ENCODE measurements at regions of chr17 and their contacts with region 1.

Region 1: GRCh38 chr17:42577532-42578281 is at the start of gene PSMC3IP:
- DNase-seq: peak in 1 of 2 donors; percentile 96
- H3K4me3 ChIP-seq: peak within 1 kb of the TSS; percentile 59 to 66
- H3K27ac ChIP-seq: peak within 1 kb of the TSS; percentile 75
- H3K4me1 ChIP-seq: peaks cover 21% of the 10 kb centered on the region
- H3K27me3 ChIP-seq: no peaks in the 10 kb centered on the region
- CTCF ChIP-seq: peak in 2 of 3 experiments; percentile 14 to 25
- POLR2A ChIP-seq: peak in 1 of 2 donors; percentile 56
- total RNA-seq, gene PSMC3IP: 0.98 TPM

Region 2: GRCh38 chr17:42677921-42678781 is 100.4 kb after region 1 on chr17:
- intact Hi-C with region 1: loop called (anchors 1 kb)
- DNase-seq: peak in 1 of 2 donors; percentile 95
- H3K4me3 ChIP-seq: peak overlapping the region; percentile 70 to 92
- H3K27ac ChIP-seq: peak overlapping the region; percentile 98
- H3K4me1 ChIP-seq: peaks cover 80% of the 10 kb centered on the region
- H3K27me3 ChIP-seq: no peaks in the 10 kb centered on the region
- CTCF ChIP-seq: no peak
- POLR2A ChIP-seq: peak in 1 of 2 donors; percentile 45

Region 3: DNA sequence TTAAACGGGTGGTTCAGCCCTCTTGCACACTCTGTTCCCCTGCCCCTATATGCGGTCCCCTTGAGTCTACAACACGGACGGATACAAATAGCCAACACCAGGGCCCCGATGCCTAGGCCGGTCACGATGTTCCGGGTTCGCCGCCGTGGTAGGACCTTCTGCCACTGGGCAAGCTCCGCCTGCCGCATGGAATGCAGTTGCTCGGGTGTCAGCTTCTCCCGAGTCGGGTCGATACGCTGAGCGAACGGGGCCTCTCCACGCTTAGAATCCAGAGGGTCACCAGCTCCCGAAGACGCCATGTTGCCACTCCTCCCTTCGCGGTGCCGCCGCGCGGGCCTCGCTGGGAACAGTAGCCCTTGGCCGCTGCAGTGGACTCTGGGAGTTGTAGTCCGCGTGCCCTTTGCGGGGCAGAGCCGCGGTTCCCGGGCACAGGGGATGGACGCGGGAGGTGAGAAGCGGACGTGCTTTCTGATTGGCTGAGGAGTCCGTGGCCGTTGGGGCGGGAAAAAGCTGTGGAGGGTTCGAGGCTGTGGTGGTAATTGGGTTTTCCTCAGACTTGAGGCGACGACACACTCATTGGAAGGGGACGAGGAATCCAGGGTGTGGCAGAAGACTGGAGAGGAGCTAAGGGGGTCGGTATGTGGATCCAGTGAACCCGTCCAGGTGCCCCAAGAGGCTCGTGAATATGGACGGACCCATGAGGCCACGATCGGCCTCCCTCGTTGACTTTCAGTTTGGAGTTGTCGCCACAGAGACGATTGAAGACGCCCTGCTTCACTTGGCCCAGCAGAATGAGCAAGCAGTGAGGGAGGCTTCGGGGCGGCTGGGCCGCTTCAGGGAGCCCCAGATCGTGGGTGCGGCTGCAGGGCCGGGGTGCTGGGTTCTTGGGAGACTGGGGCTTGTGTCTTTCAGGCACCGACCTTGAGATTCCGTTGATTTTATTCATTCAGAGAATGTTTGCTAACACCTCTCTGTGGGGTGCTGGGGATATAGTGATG is 221.0 kb after region 1 on chr17 and contains the starts of genes CNTD1 and COA3:
- intact Hi-C with region 1: no loop called
- DNase-seq: no peak
- H3K4me3 ChIP-seq: peak within 1 kb of the TSS; percentile 74 to 83
- H3K27ac ChIP-seq: peak within 1 kb of the TSS; percentile 74
- H3K4me1 ChIP-seq: peaks cover 31% of the 10 kb centered on the region
- H3K27me3 ChIP-seq: no peaks in the 10 kb centered on the region
- CTCF ChIP-seq: no peak
- POLR2A ChIP-seq: no peak
- total RNA-seq, gene CNTD1: not detected
- total RNA-seq, gene COA3: 89.4 TPM

Region 4: DNA sequence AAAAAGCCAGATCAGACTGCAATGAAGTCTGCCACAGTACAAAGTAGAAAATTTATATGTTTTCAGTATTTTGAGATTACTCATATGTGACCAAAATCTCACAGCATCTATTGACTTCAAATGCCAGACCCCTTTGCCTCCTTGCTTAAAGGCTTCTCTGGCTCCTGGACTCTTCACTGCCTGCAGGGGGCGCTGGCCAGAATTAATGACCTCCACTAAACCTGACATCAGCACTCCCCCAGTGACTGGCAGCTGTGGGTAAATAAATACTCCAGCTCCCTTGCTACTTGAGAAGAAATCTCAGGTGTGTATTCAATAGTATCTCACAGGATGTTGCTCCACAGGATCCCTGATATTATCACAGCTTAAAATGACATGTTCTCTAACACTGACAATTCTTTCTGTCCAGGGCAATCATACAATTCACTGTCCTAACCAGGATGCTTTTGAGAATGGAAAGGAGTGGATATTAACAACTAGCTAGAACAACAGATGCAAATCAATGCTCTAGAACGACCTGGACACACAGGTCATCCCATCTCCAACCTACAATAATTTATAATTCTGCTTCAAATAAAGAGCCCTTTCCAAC is 242.3 kb after region 1 on chr17:
- intact Hi-C with region 1: loop called (anchors 10 kb)
- DNase-seq: no peak
- H3K4me3 ChIP-seq: no peak overlapping the region
- H3K27ac ChIP-seq: no peak overlapping the region
- H3K4me1 ChIP-seq: peaks cover 25% of the 10 kb centered on the region
- H3K27me3 ChIP-seq: no peaks in the 10 kb centered on the region
- CTCF ChIP-seq: no peak
- POLR2A ChIP-seq: no peak

Measured in vagina (tissue), 2 donors.